Psoas muscle (tissue), 8 donors: ENCODE measurements at regions of chr18 and their contacts with region 1.

Region 1: GRCh38 chr18:37419272-37419671 is 146.3 kb downstream of the CELF4 start:
- DNase-seq: no peak
- ATAC-seq: no peak
- H3K4me3 ChIP-seq: no peak overlapping the region
- H3K27ac ChIP-seq: no peak overlapping the region
- H3K4me1 ChIP-seq: no peaks in the 10 kb centered on the region
- H3K27me3 ChIP-seq: peaks cover 0 to 5% (median 0%) of the 10 kb centered on the region in 3 donors
- CTCF ChIP-seq: no peak

Region 2: DNA sequence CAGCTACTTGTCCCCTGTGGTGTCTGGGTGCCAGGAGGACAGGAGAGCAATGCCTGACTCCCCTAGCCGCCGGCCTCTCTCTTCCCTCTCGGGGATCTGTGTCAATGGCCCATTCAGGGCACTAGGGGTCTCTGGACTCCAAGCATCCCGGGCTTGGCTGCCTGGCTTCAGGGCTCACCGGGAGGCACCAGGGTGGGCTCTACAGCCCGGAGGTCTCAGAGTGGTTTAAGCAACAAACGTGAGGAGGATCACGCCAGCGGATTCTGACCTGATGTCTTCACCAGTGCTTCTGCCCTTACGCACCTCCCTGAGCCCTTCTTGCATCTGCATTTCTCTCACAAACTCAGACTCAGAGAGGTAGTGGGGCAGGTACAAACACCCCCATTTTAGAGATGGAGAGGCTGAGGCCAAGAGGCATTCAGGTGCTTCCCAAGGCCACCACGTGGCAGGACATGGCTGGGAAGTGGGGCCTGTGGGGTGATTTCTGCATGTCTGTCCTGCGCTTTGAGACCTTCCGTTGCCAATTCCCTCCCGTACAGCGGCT is 96.7 kb before region 1 on chr18:
- intact Hi-C with region 1: no loop called
- DNase-seq: peak in 1 of 2 donors; percentile 26
- ATAC-seq: peak in 3 of 4 donors; percentile 51 to 55 (median 52)
- H3K4me3 ChIP-seq: no peak overlapping the region
- H3K27ac ChIP-seq: no peak overlapping the region
- H3K4me1 ChIP-seq: no peaks in the 10 kb centered on the region
- H3K27me3 ChIP-seq: peaks cover 0 to 13% (median 5%) of the 10 kb centered on the region in 3 donors
- CTCF ChIP-seq: peak; percentile 46

Region 3: GRCh38 chr18:37438417-37439180 is 19.3 kb after region 1 on chr18:
- intact Hi-C with region 1: loop called in 1 of 2 experiments (anchors 2 kb)
- DNase-seq: no peak
- ATAC-seq: no peak
- H3K4me3 ChIP-seq: no peak overlapping the region
- H3K27ac ChIP-seq: no peak overlapping the region
- H3K4me1 ChIP-seq: no peaks in the 10 kb centered on the region
- H3K27me3 ChIP-seq: peaks cover 0 to 12% (median 11%) of the 10 kb centered on the region in 3 donors
- CTCF ChIP-seq: no peak